ENCODE measurements at regions of chr10 and their contacts with region 1.

Region 1: DNA sequence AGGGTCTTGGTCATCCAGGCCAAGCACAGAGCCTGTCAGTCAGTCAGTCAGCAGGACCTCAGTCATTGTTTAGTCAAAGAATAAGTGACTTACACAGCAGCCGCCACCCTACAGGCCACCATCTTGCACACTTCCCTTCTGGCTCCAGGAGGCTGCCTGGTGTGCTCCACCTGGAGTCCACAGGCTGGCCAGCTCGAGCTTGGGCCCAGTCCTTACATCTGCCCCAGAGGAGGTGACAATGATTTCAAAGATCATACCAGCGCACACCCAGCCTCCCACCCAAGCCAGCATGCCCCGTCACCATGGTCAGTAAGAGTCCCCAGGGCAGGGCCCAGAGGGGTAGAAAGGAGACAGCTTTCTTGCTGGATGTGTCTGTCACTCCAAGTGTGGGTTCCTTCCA is 154.2 kb upstream of the CHST15 start:
- DNase-seq: peak in 1 of 2 experiments; percentile 18
- H3K4me3 ChIP-seq: no peak overlapping the region
- H3K4me3 Mint-ChIP-seq: no peak overlapping the region
- H3K27ac Mint-ChIP-seq: no peak overlapping the region
- H3K4me1 ChIP-seq: no peaks in the 10 kb centered on the region
- H3K4me1 Mint-ChIP-seq: no peaks in the 10 kb centered on the region
- H3K27me3 ChIP-seq: no peaks in the 10 kb centered on the region
- H3K27me3 Mint-ChIP-seq: peaks cover 10% of the 10 kb centered on the region
- CTCF ChIP-seq: no peak

Region 2: GRCh38 chr10:124288928-124289850 is 41.6 kb after region 1 on chr10:
- CTCF ChIA-PET with region 1: interaction called, 13 read pairs
- POLR2A ChIA-PET with region 1: no interaction called
- intact Hi-C with region 1: no loop called
- DNase-seq: peak in 1 of 2 experiments; percentile 20
- H3K4me3 ChIP-seq: no peak overlapping the region
- H3K4me3 Mint-ChIP-seq: no peak overlapping the region
- H3K27ac Mint-ChIP-seq: no peak overlapping the region
- H3K4me1 ChIP-seq: no peaks in the 10 kb centered on the region
- H3K4me1 Mint-ChIP-seq: no peaks in the 10 kb centered on the region
- H3K27me3 ChIP-seq: no peaks in the 10 kb centered on the region; the same call in 1 of the 2 replicates
- H3K27me3 Mint-ChIP-seq: peaks cover 6% of the 10 kb centered on the region
- CTCF ChIP-seq: no peak

Region 3: DNA sequence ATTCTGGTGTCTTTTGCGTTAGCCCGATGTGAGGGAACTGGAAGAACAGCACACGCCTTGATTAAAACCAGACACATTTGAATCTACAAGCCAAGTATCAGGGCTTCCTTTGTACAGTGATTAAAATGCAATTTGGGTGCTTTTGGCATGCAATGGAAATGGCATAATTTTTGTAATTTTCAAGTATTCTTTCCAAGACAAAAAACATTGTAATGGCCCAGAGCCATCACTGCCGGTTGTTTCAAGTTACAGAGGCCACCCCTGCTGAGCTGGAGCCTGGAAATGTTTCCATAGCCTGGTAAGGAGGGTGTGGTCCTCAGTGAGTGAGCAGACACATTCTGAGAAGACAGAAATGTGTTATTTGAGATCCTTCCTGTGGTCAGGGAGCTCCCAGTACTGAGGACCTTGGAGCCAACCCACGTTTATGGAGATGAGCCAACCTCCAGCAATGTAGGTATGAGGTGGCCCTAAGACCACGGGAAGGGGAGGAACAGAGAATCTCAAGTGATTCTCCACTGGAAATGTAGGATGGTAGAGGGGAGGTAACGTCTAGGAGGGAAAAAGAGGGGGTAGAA is 1414.4 kb after region 1 on chr10:
- CTCF ChIA-PET with region 1: no interaction called
- POLR2A ChIA-PET with region 1: no interaction called
- intact Hi-C with region 1: no loop called
- DNase-seq: no peak
- H3K4me3 ChIP-seq: no peak overlapping the region
- H3K4me3 Mint-ChIP-seq: no peak overlapping the region
- H3K27ac Mint-ChIP-seq: no peak overlapping the region
- H3K4me1 ChIP-seq: no peaks in the 10 kb centered on the region
- H3K4me1 Mint-ChIP-seq: no peaks in the 10 kb centered on the region
- H3K27me3 ChIP-seq: no peaks in the 10 kb centered on the region
- H3K27me3 Mint-ChIP-seq: peaks cover 20% of the 10 kb centered on the region
- CTCF ChIP-seq: no peak